IMR-90 (cell line): ENCODE measurements at regions of chr7 and their contacts with region 1.

Region 1: DNA sequence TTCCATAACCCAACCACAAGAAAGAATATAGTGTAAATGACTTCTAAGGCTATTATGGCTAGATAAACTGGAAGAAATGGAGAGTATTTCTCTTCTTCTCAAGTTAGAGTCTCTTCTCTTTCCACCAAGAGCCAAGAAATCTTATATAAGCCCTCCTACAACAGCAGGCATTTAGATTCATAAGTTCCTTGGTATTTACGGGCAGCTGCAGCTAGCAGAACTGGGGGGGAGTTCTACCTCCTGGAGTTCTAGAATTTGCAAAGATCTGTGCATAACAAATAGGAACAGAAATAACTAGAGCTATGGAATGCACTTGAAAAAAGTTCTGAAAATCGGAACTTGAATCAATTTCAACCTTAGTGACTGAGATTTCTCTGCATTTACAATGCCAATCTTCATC is 715.2 kb upstream of the GRM3 start:
- DNase-seq: no peak
- ATAC-seq: no peak
- H3K4me3 ChIP-seq: no peak overlapping the region
- H3K27ac ChIP-seq: no peak overlapping the region
- H3K4me1 ChIP-seq: no peaks in the 10 kb centered on the region
- H3K27me3 ChIP-seq: no peaks in the 10 kb centered on the region
- CTCF ChIP-seq: no peak
- POLR2A ChIP-seq: no peak
- RAD21 ChIP-seq: no peak

Region 2: GRCh38 chr7:86598311-86598710 is 669.8 kb after region 1 on chr7:
- CTCF ChIA-PET with region 1: no interaction called
- POLR2A ChIA-PET with region 1: no interaction called
- dilution Hi-C with region 1: no loop called
- in situ Hi-C with region 1: no loop called
- intact Hi-C with region 1: loop called (anchors 10 kb)
- DNase-seq: no peak
- ATAC-seq: no peak
- H3K4me3 ChIP-seq: no peak overlapping the region
- H3K27ac ChIP-seq: no peak overlapping the region
- H3K4me1 ChIP-seq: no peaks in the 10 kb centered on the region
- H3K27me3 ChIP-seq: no peaks in the 10 kb centered on the region
- CTCF ChIP-seq: no peak
- POLR2A ChIP-seq: no peak
- RAD21 ChIP-seq: no peak